ENCODE measurements at regions of chr3 and their contacts with region 1.

Region 1: DNA sequence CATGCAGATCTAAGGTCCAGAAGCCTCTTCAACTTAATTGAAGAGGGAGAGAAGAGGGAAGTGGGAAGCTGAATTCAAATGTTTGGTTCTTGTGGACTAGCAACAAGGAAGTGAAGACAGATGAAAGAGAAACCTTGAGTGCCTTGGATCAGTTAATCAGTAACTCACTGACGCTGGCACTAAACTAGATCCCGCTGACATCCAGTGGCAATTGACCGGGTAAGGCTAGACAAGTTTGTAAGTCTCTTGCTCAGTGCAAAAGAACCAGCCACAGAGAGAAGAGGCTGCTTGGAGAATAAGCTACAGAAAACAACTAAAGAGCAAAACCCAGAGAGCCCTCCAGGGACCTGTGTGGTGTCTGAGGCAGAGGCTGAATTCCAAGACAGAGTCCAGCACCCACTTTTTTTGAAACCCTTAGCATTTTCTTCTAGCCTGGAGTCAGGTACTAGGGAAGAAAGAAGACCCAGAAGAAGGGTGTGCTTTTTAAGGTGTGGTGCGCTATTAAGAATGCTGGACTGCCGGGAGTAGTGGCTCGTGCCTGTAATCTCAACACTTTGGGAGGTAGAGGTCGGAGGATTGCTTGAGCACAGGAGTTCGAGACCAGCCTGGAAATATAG is 6.9 kb downstream of the PLCH1 start:
- DNase-seq: peak; percentile 79 to 81
- H3K4me3 ChIP-seq: peak overlapping the region; percentile 30
- H3K4me3 Mint-ChIP-seq: peak overlapping the region; percentile 72
- H3K27ac Mint-ChIP-seq: peak overlapping the region; percentile 81
- H3K4me1 ChIP-seq: peaks cover 21% of the 10 kb centered on the region
- H3K4me1 Mint-ChIP-seq: peaks cover 27% of the 10 kb centered on the region
- H3K27me3 ChIP-seq: no peaks in the 10 kb centered on the region
- H3K27me3 Mint-ChIP-seq: no peaks in the 10 kb centered on the region
- CTCF ChIP-seq: no peak

Region 2: GRCh38 chr3:155411500-155412223 is 326.3 kb before region 1 on chr3:
- CTCF ChIA-PET with region 1: no interaction called
- POLR2A ChIA-PET with region 1: no interaction called
- intact Hi-C with region 1: loop called (anchors 1 kb)
- DNase-seq: no peak
- H3K4me3 ChIP-seq: no peak overlapping the region
- H3K4me3 Mint-ChIP-seq: no peak overlapping the region
- H3K27ac Mint-ChIP-seq: no peak overlapping the region
- H3K4me1 ChIP-seq: peaks cover 40% of the 10 kb centered on the region
- H3K4me1 Mint-ChIP-seq: peaks cover 37% of the 10 kb centered on the region
- H3K27me3 ChIP-seq: no peaks in the 10 kb centered on the region
- H3K27me3 Mint-ChIP-seq: no peaks in the 10 kb centered on the region
- CTCF ChIP-seq: no peak

Region 3: GRCh38 chr3:155714295-155714718 is 23.6 kb before region 1 on chr3:
- CTCF ChIA-PET with region 1: interaction called, 7 read pairs
- POLR2A ChIA-PET with region 1: interaction called, 5 read pairs
- intact Hi-C with region 1: loop called (anchors 1 kb)
- DNase-seq: peak; percentile 81
- H3K4me3 ChIP-seq: no peak overlapping the region
- H3K4me3 Mint-ChIP-seq: no peak overlapping the region
- H3K27ac Mint-ChIP-seq: no peak overlapping the region
- H3K4me1 ChIP-seq: peaks cover 16% of the 10 kb centered on the region; the same call in 1 of the 2 replicates
- H3K4me1 Mint-ChIP-seq: peaks cover 9% of the 10 kb centered on the region
- H3K27me3 ChIP-seq: no peaks in the 10 kb centered on the region
- H3K27me3 Mint-ChIP-seq: no peaks in the 10 kb centered on the region
- CTCF ChIP-seq: peak in 1 of 2 experiments; percentile 38

Region 4: GRCh38 chr3:155785662-155786267 is 47.8 kb after region 1 on chr3:
- CTCF ChIA-PET with region 1: no interaction called
- POLR2A ChIA-PET with region 1: no interaction called
- intact Hi-C with region 1: no loop called
- DNase-seq: no peak
- H3K4me3 ChIP-seq: no peak overlapping the region
- H3K4me3 Mint-ChIP-seq: no peak overlapping the region
- H3K27ac Mint-ChIP-seq: no peak overlapping the region
- H3K4me1 ChIP-seq: no peaks in the 10 kb centered on the region
- H3K4me1 Mint-ChIP-seq: peaks cover 7% of the 10 kb centered on the region
- H3K27me3 ChIP-seq: no peaks in the 10 kb centered on the region
- H3K27me3 Mint-ChIP-seq: no peaks in the 10 kb centered on the region
- CTCF ChIP-seq: no peak

Region 5: GRCh38 chr3:155870133-155870944 is 132.4 kb after region 1 on chr3 and contains the start of gene GMPS:
- CTCF ChIA-PET with region 1: interaction called, 3 read pairs
- POLR2A ChIA-PET with region 1: no interaction called
- intact Hi-C with region 1: loop called (anchors 2 kb)
- DNase-seq: peak; percentile 94 to 98
- H3K4me3 ChIP-seq: peak within 1 kb of the TSS; percentile 100
- H3K4me3 Mint-ChIP-seq: peak within 1 kb of the TSS; percentile 97
- H3K27ac Mint-ChIP-seq: peak within 1 kb of the TSS; percentile 95
- H3K4me1 ChIP-seq: peaks cover 12% of the 10 kb centered on the region
- H3K4me1 Mint-ChIP-seq: no peaks in the 10 kb centered on the region
- H3K27me3 ChIP-seq: no peaks in the 10 kb centered on the region
- H3K27me3 Mint-ChIP-seq: no peaks in the 10 kb centered on the region
- CTCF ChIP-seq: peak in 1 of 2 experiments; percentile 54
- total RNA-seq, gene GMPS: 90.7 and 102 TPM in 2 replicates

Measured in Caco-2 (cell line).